Dendritic cell treated with granulocyte-macrophage colony-stimulating factor and Interleukin-4, amounts not matched to agents 40 ng/mL and 50 ng/mL, for 4 days (primary cell): ENCODE measurements at regions of chr6 and their contacts with region 1.

Region 1: GRCh38 chr6:139375232-139376016 is 976 bp upstream of the CITED2 start:
- H3K4me3 Mint-ChIP-seq: peak overlapping the region; percentile 99
- H3K27ac Mint-ChIP-seq: peak overlapping the region; percentile 100
- H3K4me1 Mint-ChIP-seq: peaks cover 40% of the 10 kb centered on the region
- H3K27me3 Mint-ChIP-seq: no peaks in the 10 kb centered on the region

Region 2: DNA sequence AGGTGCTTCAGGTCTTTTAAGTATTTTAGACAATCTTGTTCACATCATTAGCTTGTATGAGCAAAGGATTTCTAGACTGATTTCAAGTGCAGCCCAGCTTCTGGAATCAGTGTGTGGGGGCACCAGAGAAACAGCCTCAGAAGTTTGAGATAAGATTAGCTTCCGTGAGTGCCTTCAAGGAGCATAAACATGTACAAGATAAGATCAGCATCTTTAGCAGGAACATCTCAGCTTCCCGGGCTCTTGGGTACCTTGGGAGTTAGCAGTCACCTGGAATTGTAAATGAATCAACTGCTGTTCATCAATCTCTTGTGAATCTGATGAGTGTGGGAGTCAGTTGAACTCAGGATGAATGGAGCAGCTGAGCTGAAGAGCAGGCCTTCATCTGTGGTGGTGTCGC is 11.0 kb after region 1 on chr6:
- intact Hi-C with region 1: no loop called
- H3K4me3 Mint-ChIP-seq: no peak overlapping the region
- H3K27ac Mint-ChIP-seq: no peak overlapping the region
- H3K4me1 Mint-ChIP-seq: no peaks in the 10 kb centered on the region
- H3K27me3 Mint-ChIP-seq: no peaks in the 10 kb centered on the region

Region 3: GRCh38 chr6:139474145-139475108 is 99.0 kb after region 1 on chr6:
- intact Hi-C with region 1: loop called (anchors 10 kb)
- H3K4me3 Mint-ChIP-seq: peak overlapping the region; percentile 43
- H3K27ac Mint-ChIP-seq: peak overlapping the region; percentile 63
- H3K4me1 Mint-ChIP-seq: peaks cover 41% of the 10 kb centered on the region
- H3K27me3 Mint-ChIP-seq: no peaks in the 10 kb centered on the region

Region 4: DNA sequence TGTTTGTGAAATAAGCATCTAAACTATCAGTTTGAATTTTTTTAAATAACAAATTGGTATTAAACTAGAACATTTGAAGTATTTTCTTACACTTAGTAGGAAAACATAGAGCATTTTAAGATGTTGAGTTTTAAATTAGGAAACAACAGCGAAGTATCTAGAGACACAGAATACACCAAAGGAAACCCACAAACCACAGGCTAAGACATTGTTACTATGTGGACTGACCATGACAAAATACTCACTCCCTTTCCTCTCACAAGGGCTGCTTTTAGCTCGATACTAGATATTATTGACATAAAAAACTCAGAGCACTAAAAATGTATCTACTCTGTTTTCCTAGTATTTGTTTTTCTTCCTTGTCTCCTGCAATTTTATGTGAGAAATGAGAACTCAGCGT is 265.0 kb after region 1 on chr6:
- intact Hi-C with region 1: loop called (anchors 5 kb)
- H3K4me3 Mint-ChIP-seq: no peak overlapping the region
- H3K27ac Mint-ChIP-seq: peak overlapping the region; percentile 79
- H3K4me1 Mint-ChIP-seq: peaks cover 68% of the 10 kb centered on the region
- H3K27me3 Mint-ChIP-seq: no peaks in the 10 kb centered on the region

Region 5: GRCh38 chr6:139846538-139847456 is 471.4 kb after region 1 on chr6:
- intact Hi-C with region 1: loop called (anchors 5 kb)
- H3K4me3 Mint-ChIP-seq: peak overlapping the region; percentile 2
- H3K27ac Mint-ChIP-seq: peak overlapping the region; percentile 88
- H3K4me1 Mint-ChIP-seq: peaks cover 50% of the 10 kb centered on the region
- H3K27me3 Mint-ChIP-seq: no peaks in the 10 kb centered on the region

Region 6: DNA sequence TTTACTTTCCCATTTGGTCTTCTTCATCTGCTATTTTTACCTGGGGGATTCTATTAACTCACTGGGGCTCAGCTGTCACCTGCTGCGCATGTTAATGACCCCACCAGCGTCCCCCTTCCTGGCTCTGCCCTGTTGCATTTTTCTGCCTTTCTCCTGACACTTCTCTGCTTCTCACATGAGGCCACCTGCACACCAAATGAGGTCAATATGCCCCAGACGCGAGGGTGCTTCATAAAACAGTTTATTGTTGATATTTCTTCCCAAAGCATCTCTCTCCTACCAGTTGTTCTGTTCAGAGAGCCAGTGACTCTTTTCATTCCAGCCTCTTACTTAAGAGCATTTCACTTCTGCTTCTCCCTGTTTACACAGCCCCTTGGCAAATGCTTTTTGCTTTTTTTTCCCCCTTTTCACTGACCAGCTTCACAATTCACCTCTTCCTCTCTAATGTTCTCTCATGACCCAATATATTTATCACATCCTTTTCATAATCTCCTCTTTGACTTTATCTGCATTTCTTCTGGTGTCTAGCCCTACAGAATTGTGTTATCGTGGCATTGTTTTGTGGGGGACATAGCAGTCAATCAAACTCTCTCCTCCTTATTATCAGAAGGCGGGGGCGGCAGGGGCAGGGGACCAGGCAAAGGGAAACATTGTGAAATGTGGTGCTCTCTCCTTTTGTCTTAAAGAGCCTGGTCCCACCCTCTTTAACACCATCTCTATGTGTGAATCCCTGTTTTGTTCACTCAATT is 544.8 kb after region 1 on chr6:
- intact Hi-C with region 1: loop called (anchors 2 kb)
- H3K4me3 Mint-ChIP-seq: peak overlapping the region; percentile 73
- H3K27ac Mint-ChIP-seq: peak overlapping the region; percentile 91
- H3K4me1 Mint-ChIP-seq: peaks cover 53% of the 10 kb centered on the region
- H3K27me3 Mint-ChIP-seq: no peaks in the 10 kb centered on the region

Region 7: DNA sequence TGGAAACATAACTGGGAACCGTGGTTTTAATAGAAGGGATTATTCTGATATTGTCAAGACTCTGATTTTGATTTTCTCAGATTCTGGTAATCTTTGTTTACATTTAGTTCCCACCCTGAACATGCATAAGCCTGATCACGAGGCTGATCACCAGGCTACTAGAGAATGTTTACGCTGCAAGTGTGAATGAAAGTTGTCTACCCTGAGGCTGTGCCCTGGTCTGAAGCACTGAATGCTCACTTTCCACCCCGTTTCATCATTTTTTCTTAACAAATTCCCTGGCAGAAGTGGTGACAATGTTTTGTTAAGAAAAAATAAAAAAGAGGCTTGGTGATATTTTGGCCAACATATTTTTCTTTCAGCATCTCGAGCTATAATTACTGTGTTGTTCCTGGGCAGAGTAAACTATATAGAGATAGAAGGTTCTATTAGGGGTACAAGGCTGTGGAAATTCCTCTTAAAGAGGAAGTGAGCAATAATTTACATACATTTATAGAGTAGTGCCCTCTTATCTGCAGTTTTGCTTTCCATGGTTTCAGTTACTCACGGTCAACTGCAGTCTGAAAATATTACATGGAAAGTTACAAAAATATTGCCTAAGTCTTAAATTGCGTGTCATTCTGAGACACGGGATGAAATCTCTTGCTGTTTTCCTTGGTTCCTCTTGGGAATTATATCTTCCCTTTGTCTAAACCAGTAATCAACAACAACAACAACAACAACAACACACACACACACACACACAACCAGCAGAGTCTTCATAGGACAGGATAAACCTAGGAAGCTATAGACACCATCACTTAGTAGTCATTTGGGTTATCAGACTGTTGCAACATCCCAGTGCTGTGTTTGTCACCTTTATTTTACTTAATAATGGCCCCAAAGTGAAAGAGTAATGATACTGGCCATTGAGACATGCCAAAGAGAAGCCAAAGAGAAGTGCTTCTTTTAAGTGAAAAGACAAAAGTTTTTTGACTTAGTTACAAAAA is 565.6 kb after region 1 on chr6:
- intact Hi-C with region 1: loop called (anchors 5 kb)
- H3K4me3 Mint-ChIP-seq: peak overlapping the region; percentile 4
- H3K27ac Mint-ChIP-seq: peak overlapping the region; percentile 75
- H3K4me1 Mint-ChIP-seq: peaks cover 30% of the 10 kb centered on the region
- H3K27me3 Mint-ChIP-seq: no peaks in the 10 kb centered on the region

Region 8: DNA sequence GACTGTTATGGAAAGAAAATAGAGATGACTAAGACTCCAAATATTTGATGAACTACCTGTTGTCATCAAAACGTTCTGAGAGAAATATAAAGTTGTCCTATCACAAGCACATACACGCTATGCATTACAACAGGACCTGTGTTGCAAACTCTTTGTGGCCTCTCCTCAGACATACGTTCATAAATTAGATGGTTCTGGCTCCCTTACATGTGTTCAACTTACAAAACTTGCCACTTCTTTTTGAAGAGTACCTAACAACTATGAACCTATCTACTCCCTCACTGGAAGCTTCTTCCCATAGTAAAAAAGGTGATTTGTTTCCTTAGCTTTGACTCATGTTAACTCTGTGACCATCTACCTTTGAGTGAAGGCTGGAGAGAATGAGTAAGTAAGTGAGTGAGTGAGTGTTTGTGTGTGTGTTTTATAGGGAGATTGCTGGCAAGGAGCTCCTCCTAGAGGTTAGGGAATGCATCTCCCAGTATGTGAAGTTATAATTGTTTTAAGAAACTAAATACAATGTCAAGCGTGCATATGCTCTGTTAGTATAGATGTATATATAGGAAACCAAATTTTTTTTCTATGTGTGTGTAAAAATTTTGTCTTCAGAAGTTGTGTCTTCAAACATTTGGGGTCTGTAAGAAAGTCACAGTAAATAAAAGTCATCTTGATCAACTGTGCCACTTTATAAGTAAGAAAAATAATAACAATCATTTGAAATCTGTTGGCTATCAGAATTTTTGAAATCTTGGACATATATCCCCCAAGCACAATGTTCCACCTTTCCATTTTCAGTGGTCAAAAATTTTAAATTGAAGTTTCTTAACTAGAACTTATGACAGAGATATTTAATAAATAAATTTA is 1546.2 kb after region 1 on chr6:
- intact Hi-C with region 1: loop called (anchors 5 kb)
- H3K4me3 Mint-ChIP-seq: no peak overlapping the region
- H3K27ac Mint-ChIP-seq: no peak overlapping the region
- H3K4me1 Mint-ChIP-seq: no peaks in the 10 kb centered on the region
- H3K27me3 Mint-ChIP-seq: no peaks in the 10 kb centered on the region